ENCODE measurements at regions of chr6 and their contacts with region 1.

Region 1: GRCh38 chr6:11460001-11460668 is 77.4 kb upstream of the TMEM170B start:
- DNase-seq: peak; percentile 66
- H3K4me3 Mint-ChIP-seq: peak overlapping the region; percentile 78
- H3K27ac Mint-ChIP-seq: peak overlapping the region; percentile 95
- H3K4me1 Mint-ChIP-seq: peaks cover 27% of the 10 kb centered on the region
- H3K27me3 Mint-ChIP-seq: no peaks in the 10 kb centered on the region

Region 2: GRCh38 chr6:11224252-11224965 is 235.7 kb before region 1 on chr6:
- intact Hi-C with region 1: loop called (anchors 2 kb)
- DNase-seq: peak; percentile 87
- H3K4me3 Mint-ChIP-seq: peak overlapping the region; percentile 72
- H3K27ac Mint-ChIP-seq: peak overlapping the region; percentile 91
- H3K4me1 Mint-ChIP-seq: peaks cover 64% of the 10 kb centered on the region
- H3K27me3 Mint-ChIP-seq: no peaks in the 10 kb centered on the region

Region 3: DNA sequence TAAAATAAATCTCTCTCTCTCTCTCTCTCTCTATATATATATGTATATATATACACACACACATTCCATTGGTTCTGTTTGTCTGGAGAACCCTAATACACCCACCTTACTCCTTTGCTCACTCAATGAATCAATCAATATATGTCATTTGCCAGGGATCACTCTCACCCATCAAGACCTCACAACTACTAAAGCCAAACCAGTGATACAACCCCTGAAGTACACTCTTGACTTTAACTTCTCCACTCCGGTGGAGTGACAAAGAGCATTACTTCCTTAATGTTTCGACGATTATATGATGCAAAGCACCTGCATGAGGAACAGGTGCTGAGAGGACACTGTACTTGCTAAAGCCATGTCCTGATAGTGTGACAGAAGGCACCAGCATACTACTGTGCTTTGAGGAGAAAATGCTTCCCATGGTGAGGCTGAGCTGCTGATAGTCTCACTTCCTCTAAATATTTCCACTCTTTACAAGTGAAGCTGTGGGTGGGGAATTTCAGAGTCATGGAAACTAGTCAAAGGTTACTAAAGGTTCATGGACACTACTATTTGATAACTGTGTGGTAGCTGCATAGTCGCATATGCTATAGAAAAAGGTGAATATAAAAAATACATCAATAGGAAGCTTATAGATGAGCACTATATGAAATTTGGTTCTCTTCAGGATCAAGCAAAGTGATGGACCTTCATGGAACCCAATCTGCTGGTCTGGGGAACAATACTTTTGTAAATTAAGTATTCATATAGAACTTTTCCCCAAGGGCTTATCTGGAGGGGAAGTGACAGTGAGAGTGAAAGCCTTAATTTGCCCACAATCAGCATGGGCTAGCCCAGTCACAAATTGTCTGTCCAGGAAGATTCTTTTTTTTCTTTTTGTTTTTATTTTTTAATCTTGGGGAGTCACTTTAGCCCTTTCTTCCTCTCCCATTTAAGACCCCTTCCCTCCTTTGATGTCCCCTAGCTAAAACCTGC is 85.8 kb before region 1 on chr6:
- intact Hi-C with region 1: loop called (anchors 2 kb)
- DNase-seq: peak; percentile 67
- H3K4me3 Mint-ChIP-seq: peak overlapping the region; percentile 58
- H3K27ac Mint-ChIP-seq: peak overlapping the region; percentile 80
- H3K4me1 Mint-ChIP-seq: peaks cover 56% of the 10 kb centered on the region
- H3K27me3 Mint-ChIP-seq: no peaks in the 10 kb centered on the region

Region 4: GRCh38 chr6:11414176-11414963 is 45.8 kb before region 1 on chr6:
- intact Hi-C with region 1: loop called (anchors 1 kb)
- DNase-seq: peak; percentile 78
- H3K4me3 Mint-ChIP-seq: no peak overlapping the region
- H3K27ac Mint-ChIP-seq: peak overlapping the region; percentile 41
- H3K4me1 Mint-ChIP-seq: peaks cover 44% of the 10 kb centered on the region
- H3K27me3 Mint-ChIP-seq: no peaks in the 10 kb centered on the region

Region 5: DNA sequence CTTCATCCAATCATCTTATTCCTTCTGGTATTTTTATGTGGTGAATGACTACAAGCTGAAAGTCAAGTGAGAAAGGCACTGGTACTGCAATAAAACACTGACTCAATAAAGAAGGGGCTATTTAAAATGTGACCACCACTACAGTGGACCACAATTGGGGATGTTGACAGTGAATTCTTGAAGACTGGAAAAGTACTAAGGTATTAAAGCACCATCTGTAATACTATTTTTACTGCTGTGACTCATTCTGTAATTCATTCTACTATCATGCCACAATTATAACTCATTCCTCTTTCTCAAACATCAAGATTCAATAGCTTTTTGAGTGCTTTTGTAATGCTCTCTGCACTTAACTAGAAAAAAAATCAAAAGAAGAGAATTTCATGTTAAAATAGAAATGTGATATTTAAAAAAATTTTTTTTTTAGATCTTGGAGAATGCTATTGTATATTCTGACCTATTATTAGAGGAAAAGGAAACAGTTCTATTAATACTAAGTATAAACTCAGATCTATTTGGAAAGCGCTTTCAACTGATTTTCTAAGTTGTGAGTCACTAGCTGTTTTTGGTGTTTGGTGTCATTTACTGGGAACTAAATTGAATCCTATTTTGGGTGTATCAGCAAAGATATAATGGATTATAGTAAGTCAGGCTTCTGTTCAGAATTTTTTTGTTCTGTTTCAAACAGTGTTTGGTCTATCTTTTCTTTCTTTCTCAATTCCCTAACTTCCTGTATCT is 27.3 kb before region 1 on chr6:
- intact Hi-C with region 1: loop called (anchors 2 kb)
- DNase-seq: no peak
- H3K4me3 Mint-ChIP-seq: no peak overlapping the region
- H3K27ac Mint-ChIP-seq: no peak overlapping the region
- H3K4me1 Mint-ChIP-seq: peaks cover 29% of the 10 kb centered on the region
- H3K27me3 Mint-ChIP-seq: no peaks in the 10 kb centered on the region

Region 6: DNA sequence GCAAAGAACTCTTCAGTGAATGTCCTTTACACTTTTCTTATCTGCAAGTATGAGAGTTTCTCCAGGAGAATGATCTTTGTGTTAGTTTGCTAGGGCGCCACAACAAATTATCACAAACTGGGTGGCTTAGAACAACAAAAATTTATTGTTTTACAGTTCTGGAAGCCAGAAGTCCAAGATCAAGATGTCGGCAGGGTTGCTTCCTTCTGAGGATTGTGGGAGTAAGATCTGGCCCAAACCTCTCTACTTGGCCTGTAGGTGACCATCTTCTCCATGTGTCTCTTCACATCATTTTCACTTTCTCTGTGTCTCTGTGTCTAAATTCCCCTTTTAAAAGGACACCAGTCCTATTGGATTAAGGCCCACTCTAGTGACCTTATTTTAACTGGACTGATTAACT is 215.5 kb after region 1 on chr6:
- intact Hi-C with region 1: no loop called
- DNase-seq: peak; percentile 51
- H3K4me3 Mint-ChIP-seq: no peak overlapping the region
- H3K27ac Mint-ChIP-seq: no peak overlapping the region
- H3K4me1 Mint-ChIP-seq: no peaks in the 10 kb centered on the region
- H3K27me3 Mint-ChIP-seq: peaks cover 7% of the 10 kb centered on the region